ENCODE measurements at regions of chr11 and their contacts with region 1.

Region 1: DNA sequence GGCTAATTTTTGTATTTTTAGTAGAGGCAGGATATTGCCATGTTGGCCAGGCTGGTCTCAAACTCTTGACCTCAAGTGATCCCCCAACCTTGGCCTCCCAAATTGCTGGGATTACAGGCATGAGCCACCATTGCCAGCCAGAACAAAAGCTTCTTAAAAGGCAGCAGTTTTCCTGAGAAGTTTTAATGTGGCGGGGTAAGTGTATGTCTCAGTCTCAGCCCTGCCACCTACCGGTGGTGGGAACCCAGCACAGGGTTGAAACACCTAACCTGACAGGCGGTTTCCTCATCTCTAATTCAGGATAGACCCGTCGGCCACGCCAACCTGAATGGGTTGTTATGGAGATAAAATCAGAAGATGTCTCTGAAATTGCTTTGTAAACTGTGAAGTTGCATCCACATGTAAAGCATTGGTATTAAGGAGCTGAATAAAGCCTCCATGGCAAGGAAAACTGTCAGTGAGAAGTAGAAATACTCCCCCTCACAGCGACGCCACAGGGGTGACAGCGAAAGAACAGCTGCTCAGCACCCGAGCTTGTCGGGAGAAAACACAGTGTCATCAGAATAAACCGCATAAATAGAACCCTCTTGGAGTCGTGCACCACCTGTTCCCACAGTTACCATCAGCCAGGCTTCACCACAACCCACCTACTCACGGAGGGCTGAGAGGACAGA is 165.9 kb upstream of the NCAM1 start:
- DNase-seq: peak in 2 of 5 donors; percentile 11 to 12
- H3K4me3 ChIP-seq: no peak overlapping the region
- H3K4me3 Mint-ChIP-seq: no peak overlapping the region
- H3K27ac ChIP-seq: no peak overlapping the region
- H3K27ac Mint-ChIP-seq: no peak overlapping the region
- H3K4me1 ChIP-seq: peaks cover 6% of the 10 kb centered on the region
- H3K4me1 Mint-ChIP-seq: peaks cover 3 to 9% (median 5%) of the 10 kb centered on the region in 4 donors
- H3K27me3 ChIP-seq: no peaks in the 10 kb centered on the region
- H3K27me3 Mint-ChIP-seq: peaks cover 1 to 2% of the 10 kb centered on the region in 2 donors

Region 2: GRCh38 chr11:112806876-112807275 is 11.6 kb after region 1 on chr11:
- CTCF ChIA-PET with region 1: interaction called, 13 read pairs
- POLR2A ChIA-PET with region 1: no interaction called
- intact Hi-C with region 1: no loop called
- DNase-seq: no peak
- H3K4me3 ChIP-seq: no peak overlapping the region
- H3K4me3 Mint-ChIP-seq: no peak overlapping the region
- H3K27ac ChIP-seq: no peak overlapping the region
- H3K27ac Mint-ChIP-seq: no peak overlapping the region
- H3K4me1 ChIP-seq: no peaks in the 10 kb centered on the region
- H3K4me1 Mint-ChIP-seq: no peaks in the 10 kb centered on the region
- H3K27me3 ChIP-seq: no peaks in the 10 kb centered on the region
- H3K27me3 Mint-ChIP-seq: peaks cover 0 to 3% of the 10 kb centered on the region in 2 donors